ENCODE measurements at regions of chr18 and their contacts with region 1.

Region 1: DNA sequence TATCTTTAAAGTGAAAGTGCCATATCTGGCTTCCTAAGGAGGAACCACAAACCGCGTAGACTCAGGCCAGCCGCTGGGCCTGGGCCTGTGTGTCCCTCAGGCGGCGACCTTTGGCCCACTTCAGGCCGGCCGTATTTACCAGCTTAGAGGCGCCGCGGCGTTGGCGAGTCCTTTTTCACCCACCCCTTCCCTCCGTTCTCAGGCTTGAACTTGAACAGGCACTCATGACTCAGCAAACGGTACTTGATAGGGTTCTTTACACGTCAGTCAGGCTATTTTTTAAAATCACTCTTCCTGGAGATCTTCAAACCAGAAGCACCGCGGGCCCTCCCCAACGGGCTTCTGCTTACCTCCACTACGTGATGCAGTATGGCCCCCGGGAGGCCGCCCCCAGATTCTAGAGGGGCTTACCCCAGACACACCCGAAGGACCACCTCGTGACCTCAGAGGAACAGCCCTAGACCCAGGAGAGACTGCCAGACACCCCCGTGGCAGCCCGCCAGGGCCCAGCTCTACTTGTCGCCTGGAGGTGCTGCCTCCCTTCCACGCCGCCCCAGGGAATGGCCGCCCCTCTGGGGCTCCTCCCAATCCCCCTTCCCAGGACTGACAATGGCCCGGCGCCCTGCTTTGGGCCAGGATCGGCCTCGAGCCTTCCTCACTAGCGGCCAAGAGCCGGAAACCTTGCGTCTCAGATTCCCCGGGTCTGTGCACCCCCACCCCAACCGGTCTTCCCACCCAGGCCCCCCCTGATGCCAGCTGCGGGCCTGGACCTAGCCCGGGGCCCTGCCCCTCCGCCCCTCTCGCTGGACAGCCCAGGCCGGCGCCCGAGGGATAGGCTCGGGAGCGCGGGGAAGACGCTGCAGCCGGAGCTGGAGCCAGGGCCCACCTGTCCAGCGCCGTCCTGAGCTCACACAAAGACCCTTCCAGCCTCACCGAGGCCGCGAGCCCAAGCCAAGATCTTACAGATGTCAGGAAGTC is 33.8 kb upstream of the IMPA2 start:
- DNase-seq: peak; percentile 95 to 97
- ATAC-seq: peak; percentile 90 to 92 (median 92)
- H3K4me3 ChIP-seq: peak overlapping the region; percentile 68
- H3K27ac ChIP-seq: peak overlapping the region; percentile 94
- H3K4me1 ChIP-seq: peaks cover 17% of the 10 kb centered on the region
- H3K27me3 ChIP-seq: no peaks in the 10 kb centered on the region
- CTCF ChIP-seq: no peak

Region 2: GRCh38 chr18:11987527-11987926 is 40.0 kb after region 1 on chr18:
- intact Hi-C with region 1: loop called in 1 of 2 experiments (anchors 2 kb)
- DNase-seq: peak in 1 of 2 donors; percentile 81
- ATAC-seq: peak; percentile 82 to 85 (median 84)
- H3K4me3 ChIP-seq: peak overlapping the region; percentile 35
- H3K27ac ChIP-seq: peak overlapping the region; percentile 86
- H3K4me1 ChIP-seq: peaks cover 69% of the 10 kb centered on the region
- H3K27me3 ChIP-seq: no peaks in the 10 kb centered on the region
- CTCF ChIP-seq: no peak

Region 3: GRCh38 chr18:12236934-12237832 is 289.7 kb after region 1 on chr18:
- intact Hi-C with region 1: no loop called
- DNase-seq: peak; percentile 73 to 84
- ATAC-seq: peak; percentile 88 to 94 (median 91)
- H3K4me3 ChIP-seq: peak overlapping the region; percentile 28
- H3K27ac ChIP-seq: no peak overlapping the region
- H3K4me1 ChIP-seq: no peaks in the 10 kb centered on the region
- H3K27me3 ChIP-seq: peaks cover 0 to 7% (median 0%) of the 10 kb centered on the region in 3 donors
- CTCF ChIP-seq: peak; percentile 81

Measured in psoas muscle (tissue), 8 donors.